ENCODE measurements at regions of chr1 and their contacts with region 1.

Region 1: GRCh38 chr1:241519308-241520079 is at the start of gene FH:
- DNase-seq: peak; percentile 90 to 98
- ATAC-seq: peak; percentile 97 to 100 (median 97)
- H3K4me3 ChIP-seq: peak within 1 kb of the TSS; percentile 46
- H3K4me3 Mint-ChIP-seq: peak within 1 kb of the TSS; percentile 89
- H3K27ac ChIP-seq: peak within 1 kb of the TSS; percentile 63
- H3K27ac Mint-ChIP-seq: peak within 1 kb of the TSS in 1 of 2 donors; percentile 49
- H3K4me1 ChIP-seq: no peaks in the 10 kb centered on the region
- H3K4me1 Mint-ChIP-seq: peaks cover 5 to 11% of the 10 kb centered on the region in 2 donors
- H3K27me3 ChIP-seq: peaks cover 2% of the 10 kb centered on the region
- H3K27me3 Mint-ChIP-seq: peaks cover 22 to 27% of the 10 kb centered on the region in 2 donors
- CTCF ChIP-seq: no peak
- total RNA-seq, gene FH: 16.6 to 18.3 (median 16.7) TPM

Region 2: DNA sequence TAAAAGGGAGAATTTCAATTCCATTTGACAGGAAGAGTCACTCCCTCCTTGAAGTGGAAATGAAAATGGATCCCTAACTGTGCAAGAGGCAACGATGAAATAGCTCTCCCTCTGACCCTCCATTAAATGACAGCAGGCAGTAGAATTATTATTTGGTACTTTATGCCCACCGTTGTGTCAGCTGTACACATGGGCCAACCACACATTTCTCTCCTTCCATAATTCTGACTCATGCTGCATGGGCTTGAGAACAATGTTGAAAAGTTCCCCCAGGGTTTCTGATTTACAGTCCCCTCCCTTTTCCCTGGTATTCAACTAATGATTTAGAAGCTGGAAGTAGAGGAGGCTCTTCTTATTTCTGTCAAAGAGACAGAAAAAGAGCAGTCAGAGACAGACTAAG is 266.0 kb before region 1 on chr1:
- intact Hi-C with region 1: no loop called
- DNase-seq: no peak
- ATAC-seq: no peak
- H3K4me3 ChIP-seq: no peak overlapping the region
- H3K4me3 Mint-ChIP-seq: no peak overlapping the region
- H3K27ac ChIP-seq: no peak overlapping the region
- H3K27ac Mint-ChIP-seq: no peak overlapping the region
- H3K4me1 ChIP-seq: no peaks in the 10 kb centered on the region
- H3K4me1 Mint-ChIP-seq: no peaks in the 10 kb centered on the region
- H3K27me3 ChIP-seq: no peaks in the 10 kb centered on the region
- H3K27me3 Mint-ChIP-seq: no peaks in the 10 kb centered on the region
- CTCF ChIP-seq: no peak

Region 3: DNA sequence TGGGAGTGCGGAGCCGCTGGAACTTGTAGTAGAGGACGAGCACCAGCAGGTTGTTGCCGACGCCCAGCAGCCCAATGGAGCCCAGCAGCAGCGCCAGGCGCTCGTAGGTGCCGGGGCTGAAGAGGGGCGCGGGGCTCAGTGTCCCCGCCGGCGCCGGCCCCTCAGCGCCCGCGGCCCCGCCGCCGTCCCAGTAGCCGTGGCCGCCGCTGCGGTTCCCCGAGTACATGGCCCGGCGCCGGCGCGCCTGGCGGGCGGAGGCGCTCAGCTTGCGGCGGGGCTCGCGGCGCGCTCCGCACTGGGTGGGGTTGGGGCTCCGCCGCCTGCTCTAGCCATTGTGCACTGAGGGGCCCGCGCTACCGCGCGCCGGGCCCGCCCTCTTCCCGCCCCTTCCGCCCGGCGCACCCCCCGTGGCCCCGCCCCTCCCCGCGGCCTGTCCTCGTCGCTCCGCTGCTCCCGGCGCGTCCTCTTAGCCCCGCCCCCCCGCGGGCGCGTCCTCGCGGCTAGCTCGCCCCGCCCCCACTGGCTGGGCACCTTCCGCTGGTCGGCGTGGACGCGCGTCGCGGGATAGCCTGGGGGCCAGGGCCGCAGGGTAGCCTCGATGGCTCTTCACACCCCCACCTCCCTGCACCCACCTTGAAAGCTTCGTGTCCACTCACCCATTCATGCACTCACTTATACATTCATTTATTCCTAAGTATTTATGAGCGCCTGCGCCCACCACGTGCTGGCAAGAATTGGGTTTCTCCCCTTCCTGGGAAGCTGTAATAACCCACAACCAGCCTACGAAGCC is 120.7 kb after region 1 on chr1 and contains the starts of genes CHML and OPN3:
- intact Hi-C with region 1: loop called (anchors 5 kb)
- DNase-seq: peak; percentile 87 to 94
- ATAC-seq: peak; percentile 94 to 98 (median 96)
- H3K4me3 ChIP-seq: peak within 1 kb of the TSS; percentile 97
- H3K4me3 Mint-ChIP-seq: peak within 1 kb of the TSS; percentile 82
- H3K27ac ChIP-seq: peak within 1 kb of the TSS; percentile 79
- H3K27ac Mint-ChIP-seq: peak within 1 kb of the TSS; percentile 44 to 61
- H3K4me1 ChIP-seq: peaks cover 5% of the 10 kb centered on the region
- H3K4me1 Mint-ChIP-seq: peaks cover 22 to 31% of the 10 kb centered on the region in 2 donors
- H3K27me3 ChIP-seq: no peaks in the 10 kb centered on the region
- H3K27me3 Mint-ChIP-seq: no peaks in the 10 kb centered on the region
- CTCF ChIP-seq: no peak
- total RNA-seq, gene CHML: 6.8 to 11.8 (median 7.8) TPM
- total RNA-seq, gene OPN3: 3.9 to 5.1 (median 4.1) TPM

Region 4: DNA sequence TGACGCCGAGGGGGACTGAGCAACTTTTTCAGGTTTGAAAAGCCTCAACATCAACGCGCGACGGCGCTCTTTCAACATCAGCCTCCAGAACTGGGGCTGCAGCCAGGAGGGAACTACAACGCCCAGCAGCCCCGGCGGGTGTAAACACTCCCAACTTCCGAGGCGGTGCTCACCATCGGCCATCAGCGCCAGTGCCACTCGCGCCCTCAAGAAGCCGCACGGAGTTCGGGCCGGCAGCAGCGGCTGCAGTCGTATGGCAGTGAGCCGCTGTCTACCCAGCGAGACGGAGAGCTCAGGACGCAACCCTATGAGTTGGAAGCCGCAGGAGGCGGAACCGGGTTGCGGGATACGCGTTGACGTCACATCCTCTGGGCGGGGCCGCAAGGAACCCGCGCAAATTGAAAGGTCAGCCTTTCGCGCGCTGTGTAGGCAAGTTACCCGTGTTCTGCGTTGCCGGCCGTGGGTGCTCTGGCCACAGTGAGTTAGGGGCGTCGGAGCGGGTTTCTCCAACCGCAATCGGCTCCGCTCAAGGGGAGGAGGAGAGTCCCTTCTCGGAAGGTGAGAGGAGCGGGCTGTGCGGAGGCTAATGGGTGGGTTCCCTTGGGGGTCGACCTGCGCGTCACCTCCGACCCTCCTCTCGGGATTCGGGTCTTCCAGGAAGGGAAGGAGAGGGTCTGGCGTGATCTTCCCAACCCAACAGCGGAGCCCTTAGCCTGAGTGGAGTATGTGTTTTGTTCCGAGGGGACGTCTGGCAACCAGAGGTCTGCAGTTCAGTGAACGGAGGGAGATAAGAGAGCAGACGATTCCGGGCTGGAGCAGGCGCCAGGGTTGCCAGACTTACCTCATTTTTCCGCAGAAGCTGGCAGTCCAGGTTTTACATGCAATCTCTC is 328.5 kb after region 1 on chr1 and contains the start of gene EXO1:
- intact Hi-C with region 1: loop called (anchors 5 kb)
- DNase-seq: peak; percentile 86 to 94
- ATAC-seq: peak; percentile 97
- H3K4me3 ChIP-seq: peak within 1 kb of the TSS; percentile 97
- H3K4me3 Mint-ChIP-seq: peak within 1 kb of the TSS; percentile 99
- H3K27ac ChIP-seq: peak within 1 kb of the TSS; percentile 99
- H3K27ac Mint-ChIP-seq: peak within 1 kb of the TSS; percentile 98 to 99
- H3K4me1 ChIP-seq: peaks cover 7% of the 10 kb centered on the region
- H3K4me1 Mint-ChIP-seq: peaks cover 16% of the 10 kb centered on the region in 2 donors
- H3K27me3 ChIP-seq: no peaks in the 10 kb centered on the region
- H3K27me3 Mint-ChIP-seq: peaks cover 6 to 10% of the 10 kb centered on the region in 2 donors
- CTCF ChIP-seq: peak; percentile 9
- total RNA-seq, gene EXO1: 1.6 to 2.7 (median 1.7) TPM